Activated CD8-positive, alpha-beta T cell treated with anti-CD3 and anti-CD28 coated beads, Interleukin-2, amount 10 ng/mL, durations not matched to agents 7 days and 5 days (primary cell): ENCODE measurements at regions of chr2 and their contacts with region 1.

Region 1: GRCh38 chr2:197113275-197113711 is 186.8 kb upstream of the PGAP1 start:
- DNase-seq: no peak
- ATAC-seq: no peak
- H3K4me3 Mint-ChIP-seq: no peak overlapping the region
- H3K27ac Mint-ChIP-seq: peak overlapping the region; percentile 81
- H3K4me1 Mint-ChIP-seq: peaks cover 25% of the 10 kb centered on the region
- H3K27me3 Mint-ChIP-seq: no peaks in the 10 kb centered on the region

Region 2: DNA sequence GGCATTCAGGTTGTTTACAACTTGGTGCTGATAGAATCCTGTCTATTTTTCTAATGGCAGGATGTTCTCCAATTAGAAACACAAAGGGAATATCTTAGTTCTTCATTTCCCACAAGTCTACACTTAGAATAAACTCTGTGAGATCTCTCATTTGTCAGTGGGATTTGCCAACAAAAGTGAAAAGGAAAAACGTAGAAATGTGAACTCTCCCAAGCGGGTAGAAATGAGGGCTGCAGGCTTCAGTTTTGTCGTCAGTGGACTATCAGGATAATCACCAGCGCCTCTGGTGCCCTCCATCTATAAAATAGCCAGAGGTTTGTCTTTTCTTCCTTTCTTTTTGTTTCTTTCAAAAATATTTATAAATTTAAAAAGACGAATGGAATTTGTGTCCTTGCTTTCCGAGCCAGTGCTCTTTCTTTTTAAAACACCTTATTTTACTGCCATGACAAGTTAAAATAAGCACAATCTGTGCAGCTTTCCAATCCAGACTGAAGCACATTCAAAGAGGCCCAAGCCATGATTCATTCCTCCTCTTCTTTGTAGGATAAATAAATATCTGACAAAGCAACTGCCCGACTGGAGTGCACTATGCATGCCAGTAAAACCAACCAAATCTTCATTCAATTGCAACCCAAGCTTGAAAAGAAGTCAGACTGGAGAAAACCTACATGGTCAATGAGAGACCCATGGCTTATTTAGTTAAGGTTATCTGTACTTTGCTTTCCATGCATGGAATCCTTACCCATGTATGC is 11.5 kb after region 1 on chr2:
- CTCF ChIA-PET with region 1: interaction called, 37 read pairs
- POLR2A ChIA-PET with region 1: no interaction called
- DNase-seq: no peak
- ATAC-seq: no peak
- H3K4me3 Mint-ChIP-seq: no peak overlapping the region
- H3K27ac Mint-ChIP-seq: no peak overlapping the region
- H3K4me1 Mint-ChIP-seq: peaks cover 51% of the 10 kb centered on the region
- H3K27me3 Mint-ChIP-seq: no peaks in the 10 kb centered on the region

Region 3: DNA sequence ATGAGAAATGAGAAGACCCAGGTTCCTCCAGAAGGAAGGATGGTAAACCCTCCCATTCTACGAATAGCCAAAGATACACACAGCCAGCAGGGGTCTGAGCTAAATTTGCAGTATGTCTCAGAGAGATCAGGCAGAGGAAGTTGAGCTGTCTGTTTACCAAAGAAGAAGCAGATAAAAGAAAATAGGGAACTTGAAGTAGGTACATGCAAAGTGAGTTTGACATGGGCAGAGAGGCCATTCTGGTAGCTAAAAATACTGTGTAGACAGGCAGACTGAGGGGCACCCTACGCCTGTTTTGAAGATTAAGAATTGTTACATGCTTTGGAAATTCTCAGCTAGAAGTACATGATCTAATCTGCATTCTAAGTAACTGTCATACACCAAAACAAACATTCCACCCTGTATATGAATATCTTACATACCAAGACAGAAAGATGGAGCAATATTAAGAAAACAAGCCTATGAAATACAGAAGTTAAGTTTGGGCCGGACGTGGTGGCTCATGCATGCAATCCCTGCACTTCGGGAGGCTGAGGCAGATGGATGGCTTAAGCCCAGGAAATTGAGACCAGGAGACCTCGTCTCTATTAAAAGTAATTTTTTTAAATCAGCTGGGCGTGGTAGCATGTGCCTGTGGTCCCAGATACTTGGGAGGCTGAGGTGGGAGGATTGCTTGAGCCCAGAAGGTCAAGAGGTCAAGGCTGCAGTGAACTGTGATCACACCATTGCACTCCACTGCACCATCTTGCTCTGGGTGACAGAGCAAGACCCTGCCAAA is 39.3 kb after region 1 on chr2:
- CTCF ChIA-PET with region 1: interaction called, 17 read pairs
- POLR2A ChIA-PET with region 1: interaction called, 3 read pairs
- DNase-seq: no peak
- ATAC-seq: peak; percentile 64
- H3K4me3 Mint-ChIP-seq: no peak overlapping the region
- H3K27ac Mint-ChIP-seq: peak overlapping the region; percentile 45
- H3K4me1 Mint-ChIP-seq: peaks cover 69% of the 10 kb centered on the region
- H3K27me3 Mint-ChIP-seq: no peaks in the 10 kb centered on the region

Region 4: DNA sequence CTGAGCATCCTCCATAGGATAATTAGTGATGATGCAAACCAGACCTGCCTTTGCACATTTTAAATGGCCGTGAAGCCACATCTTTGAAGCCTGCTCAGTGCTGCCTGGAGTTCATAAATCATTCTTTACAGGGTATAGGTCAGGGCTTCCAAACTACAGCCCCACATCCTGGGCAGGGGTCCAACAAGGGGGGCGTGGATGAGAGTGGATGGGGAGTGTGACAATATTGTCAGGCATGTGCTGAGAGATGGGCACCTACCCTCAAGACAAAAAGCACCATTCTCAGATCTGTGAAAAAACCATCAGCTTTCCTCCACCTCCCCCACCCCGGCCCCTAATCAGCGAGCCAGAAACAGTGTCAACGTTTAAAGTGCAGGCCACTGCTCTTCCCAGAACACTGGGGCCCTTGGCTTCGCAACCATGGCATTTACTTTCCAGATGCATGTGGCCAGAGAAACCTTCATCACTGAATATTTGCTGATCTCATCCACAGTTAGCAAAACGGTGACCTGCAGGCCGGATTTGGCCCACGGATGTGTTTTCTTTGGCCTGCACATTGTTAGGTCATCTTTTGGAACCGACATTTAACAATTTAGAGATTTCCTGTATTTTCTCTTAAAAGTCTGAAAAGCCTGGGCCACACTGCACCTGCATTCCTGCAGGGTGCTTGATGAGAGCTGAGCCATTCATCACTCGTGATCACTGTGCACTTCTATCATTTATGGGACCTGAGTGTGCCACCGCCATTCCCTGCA is 66.6 kb after region 1 on chr2:
- CTCF ChIA-PET with region 1: interaction called, 14 read pairs
- POLR2A ChIA-PET with region 1: no interaction called
- DNase-seq: no peak
- ATAC-seq: no peak
- H3K4me3 Mint-ChIP-seq: no peak overlapping the region
- H3K27ac Mint-ChIP-seq: no peak overlapping the region
- H3K4me1 Mint-ChIP-seq: peaks cover 36% of the 10 kb centered on the region
- H3K27me3 Mint-ChIP-seq: no peaks in the 10 kb centered on the region

Region 5: DNA sequence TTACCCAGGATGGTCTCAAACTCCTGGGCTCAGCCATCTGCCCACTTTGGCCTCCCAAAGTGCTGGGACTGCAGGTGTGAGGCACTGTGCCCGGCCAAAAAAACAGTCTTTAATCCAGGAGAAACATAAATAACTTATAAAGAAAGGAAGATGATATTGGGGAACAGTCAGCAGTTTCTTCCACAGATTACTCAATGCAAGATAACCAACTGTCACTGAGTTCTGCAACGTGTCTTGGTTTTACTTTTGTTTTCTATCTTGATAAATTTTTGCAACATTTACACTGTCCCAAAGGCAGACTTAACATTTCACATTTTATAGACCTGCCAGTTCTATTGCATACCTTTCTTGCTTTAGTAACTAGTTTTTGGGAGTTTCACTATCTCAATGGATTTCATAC is 126.1 kb after region 1 on chr2:
- CTCF ChIA-PET with region 1: interaction called, 10 read pairs
- POLR2A ChIA-PET with region 1: no interaction called
- DNase-seq: no peak
- ATAC-seq: peak; percentile 57
- H3K4me3 Mint-ChIP-seq: peak overlapping the region; percentile 77
- H3K27ac Mint-ChIP-seq: peak overlapping the region; percentile 91
- H3K4me1 Mint-ChIP-seq: peaks cover 83% of the 10 kb centered on the region
- H3K27me3 Mint-ChIP-seq: no peaks in the 10 kb centered on the region

Region 6: GRCh38 chr2:197356136-197356535 is 242.8 kb after region 1 on chr2:
- CTCF ChIA-PET with region 1: interaction called, 10 read pairs
- POLR2A ChIA-PET with region 1: no interaction called
- DNase-seq: no peak
- ATAC-seq: peak; percentile 45
- H3K4me3 Mint-ChIP-seq: no peak overlapping the region
- H3K27ac Mint-ChIP-seq: no peak overlapping the region
- H3K4me1 Mint-ChIP-seq: peaks cover 18% of the 10 kb centered on the region
- H3K27me3 Mint-ChIP-seq: no peaks in the 10 kb centered on the region